Activated naive CD4-positive, alpha-beta T cell treated with anti-CD3 and anti-CD28 coated beads for 36 hours (primary cell): ENCODE measurements at regions of chr5 and their contacts with region 1.

Region 1: DNA sequence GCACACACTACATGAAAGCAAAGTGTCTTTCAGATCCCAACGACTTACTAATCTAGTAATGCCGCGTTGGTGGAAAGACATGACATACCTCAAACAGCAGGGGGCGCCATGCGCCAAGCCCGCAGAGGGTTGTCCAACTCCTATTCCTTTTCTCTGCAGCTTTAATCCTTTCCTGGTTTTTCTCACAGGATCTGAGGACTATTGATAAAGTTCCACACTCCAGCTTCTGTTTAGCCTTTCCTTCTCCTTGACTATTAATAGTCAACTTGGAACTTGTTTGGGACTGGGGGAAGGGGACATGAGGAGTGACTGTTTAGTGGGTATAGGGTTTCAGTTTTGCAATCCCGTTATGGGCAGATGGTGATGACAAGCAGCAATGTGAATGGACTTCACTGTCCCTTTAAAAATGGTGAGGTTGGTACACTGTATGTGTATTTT is 62.9 kb downstream of the OTULIN start:
- DNase-seq: peak; percentile 83
- H3K4me3 Mint-ChIP-seq: no peak overlapping the region
- H3K27ac Mint-ChIP-seq: no peak overlapping the region
- H3K4me1 Mint-ChIP-seq: peaks cover 19% of the 10 kb centered on the region
- H3K27me3 Mint-ChIP-seq: no peaks in the 10 kb centered on the region

Region 2: GRCh38 chr5:14081791-14082190 is 645.7 kb before region 1 on chr5:
- CTCF ChIA-PET with region 1: no interaction called
- intact Hi-C with region 1: no loop called
- DNase-seq: no peak
- H3K4me3 Mint-ChIP-seq: no peak overlapping the region
- H3K27ac Mint-ChIP-seq: no peak overlapping the region
- H3K4me1 Mint-ChIP-seq: no peaks in the 10 kb centered on the region
- H3K27me3 Mint-ChIP-seq: peaks cover 5% of the 10 kb centered on the region

Region 3: GRCh38 chr5:14531668-14532067 is 195.8 kb before region 1 on chr5:
- CTCF ChIA-PET with region 1: no interaction called
- intact Hi-C with region 1: no loop called
- DNase-seq: no peak
- H3K4me3 Mint-ChIP-seq: no peak overlapping the region
- H3K27ac Mint-ChIP-seq: no peak overlapping the region
- H3K4me1 Mint-ChIP-seq: no peaks in the 10 kb centered on the region
- H3K27me3 Mint-ChIP-seq: no peaks in the 10 kb centered on the region

Region 4: GRCh38 chr5:14685757-14686156 is 41.7 kb before region 1 on chr5:
- CTCF ChIA-PET with region 1: interaction called, 8 read pairs
- intact Hi-C with region 1: loop called (anchors 1 kb)
- DNase-seq: peak; percentile 55
- H3K4me3 Mint-ChIP-seq: peak overlapping the region; percentile 42
- H3K27ac Mint-ChIP-seq: peak overlapping the region; percentile 68
- H3K4me1 Mint-ChIP-seq: peaks cover 14% of the 10 kb centered on the region
- H3K27me3 Mint-ChIP-seq: no peaks in the 10 kb centered on the region

Region 5: GRCh38 chr5:14706615-14707021 is 20.8 kb before region 1 on chr5:
- CTCF ChIA-PET with region 1: interaction called, 10 read pairs
- intact Hi-C with region 1: no loop called
- DNase-seq: peak; percentile 46
- H3K4me3 Mint-ChIP-seq: peak overlapping the region; percentile 18
- H3K27ac Mint-ChIP-seq: peak overlapping the region; percentile 94
- H3K4me1 Mint-ChIP-seq: peaks cover 75% of the 10 kb centered on the region
- H3K27me3 Mint-ChIP-seq: no peaks in the 10 kb centered on the region

Region 6: GRCh38 chr5:14946815-14947640 is 219.6 kb after region 1 on chr5:
- CTCF ChIA-PET with region 1: interaction called, 6 read pairs
- intact Hi-C with region 1: loop called (anchors 1 kb)
- DNase-seq: peak; percentile 59
- H3K4me3 Mint-ChIP-seq: no peak overlapping the region
- H3K27ac Mint-ChIP-seq: peak overlapping the region; percentile 62
- H3K4me1 Mint-ChIP-seq: peaks cover 21% of the 10 kb centered on the region
- H3K27me3 Mint-ChIP-seq: no peaks in the 10 kb centered on the region